Astrocyte of the cerebellum (primary cell): ENCODE measurements at regions of chr10 and their contacts with region 1.

Region 1: GRCh38 chr10:59006511-59007306 is 169.7 kb upstream of the PHYHIPL start:
- DNase-seq: peak; percentile 63
- H3K4me3 ChIP-seq: no peak overlapping the region
- CTCF ChIP-seq: no peak

Region 2: GRCh38 chr10:58932126-58932525 is 74.6 kb before region 1 on chr10:
- in situ Hi-C with region 1: no loop called
- DNase-seq: peak; percentile 49
- H3K4me3 ChIP-seq: no peak overlapping the region
- CTCF ChIP-seq: no peak

Region 3: GRCh38 chr10:59107147-59107546 is 100.4 kb after region 1 on chr10:
- in situ Hi-C with region 1: loop called (anchors 25 kb)
- DNase-seq: peak; percentile 29
- H3K4me3 ChIP-seq: no peak overlapping the region
- CTCF ChIP-seq: no peak

Region 4: DNA sequence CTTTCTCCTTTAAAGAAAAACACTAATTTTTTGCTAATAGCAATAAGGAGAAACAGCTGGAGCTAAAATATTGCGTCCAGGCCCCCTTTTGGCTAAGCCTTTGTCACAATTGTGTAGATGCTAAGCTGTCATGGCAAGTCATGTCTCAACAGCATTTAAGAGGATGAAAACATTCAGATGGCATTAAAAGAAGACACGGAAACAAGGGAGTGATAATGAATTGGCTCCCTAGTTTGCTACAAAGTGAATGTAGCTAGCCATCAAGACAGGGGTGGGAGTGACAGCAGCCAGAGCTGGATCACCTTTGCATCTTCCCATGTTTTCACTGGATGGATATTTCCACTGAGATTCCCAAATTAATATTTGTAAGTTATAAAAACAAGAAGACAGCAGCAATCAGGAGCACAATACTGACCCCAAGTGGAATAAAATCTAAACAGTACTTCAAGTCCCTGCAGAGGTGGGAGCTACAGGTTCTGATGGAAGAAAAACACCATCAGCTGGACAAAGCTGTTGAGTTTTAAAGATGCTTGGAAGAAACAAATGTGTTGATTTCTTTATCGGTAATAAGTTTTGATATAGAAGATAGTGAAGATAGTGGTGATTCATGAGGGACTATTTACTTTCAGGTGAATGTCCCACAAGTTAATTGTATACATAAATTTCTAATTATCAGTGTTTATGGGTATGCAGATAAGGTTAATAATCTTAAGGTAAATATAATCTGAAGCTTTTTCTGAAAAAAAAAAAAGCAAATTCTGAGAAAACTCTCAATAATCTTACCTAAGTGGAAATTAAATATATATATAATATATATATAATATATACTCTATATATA is 573.5 kb after region 1 on chr10:
- in situ Hi-C with region 1: loop called (anchors 25 kb)
- DNase-seq: peak; percentile 49
- H3K4me3 ChIP-seq: no peak overlapping the region
- CTCF ChIP-seq: peak; percentile 47